ENCODE measurements at regions of chr5 and their contacts with region 1.

Region 1: DNA sequence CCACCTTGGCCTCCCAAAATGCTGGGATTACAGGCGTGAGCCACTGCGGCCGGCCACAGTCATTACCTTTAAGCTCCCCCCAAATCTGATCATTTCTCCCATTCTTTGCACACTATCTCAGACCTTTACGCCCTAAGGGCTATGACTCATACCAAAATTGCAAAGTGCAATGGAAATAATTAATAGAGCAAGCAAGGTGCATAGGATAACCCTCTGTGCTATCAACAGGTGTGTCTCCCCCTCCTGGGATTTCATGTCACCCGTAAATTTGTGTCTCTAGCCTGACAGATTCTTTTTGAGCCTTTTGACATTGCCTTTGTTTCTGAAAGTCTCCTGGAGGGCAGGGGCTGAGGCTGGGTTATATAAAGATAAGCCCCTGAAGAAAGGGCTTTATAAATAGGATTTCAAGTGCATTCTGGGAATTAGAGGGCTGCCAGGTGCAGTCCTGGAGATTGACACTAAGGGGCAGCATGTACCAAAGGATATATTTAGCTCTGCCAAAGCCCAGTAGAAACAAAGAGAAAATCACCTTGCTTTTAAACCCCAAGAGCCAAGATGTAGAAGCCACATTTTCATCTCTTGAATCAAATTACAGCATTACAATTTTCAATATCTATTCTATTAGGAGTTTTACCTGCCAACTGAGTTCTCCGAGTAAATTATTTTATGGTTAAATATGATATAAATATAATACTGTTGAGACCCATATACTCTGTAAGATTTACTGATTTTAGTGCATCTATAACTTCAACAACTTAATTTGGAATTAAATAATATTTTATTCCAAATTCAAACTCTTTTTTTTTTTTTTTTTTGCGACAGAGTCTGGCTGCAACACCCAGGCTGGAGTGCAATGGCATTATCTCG is 18.2 kb downstream of the S100Z start:
- DNase-seq: peak; percentile 49
- H3K4me3 Mint-ChIP-seq: no peak overlapping the region
- H3K27ac Mint-ChIP-seq: no peak overlapping the region
- H3K4me1 Mint-ChIP-seq: no peaks in the 10 kb centered on the region
- H3K27me3 Mint-ChIP-seq: no peaks in the 10 kb centered on the region

Region 2: DNA sequence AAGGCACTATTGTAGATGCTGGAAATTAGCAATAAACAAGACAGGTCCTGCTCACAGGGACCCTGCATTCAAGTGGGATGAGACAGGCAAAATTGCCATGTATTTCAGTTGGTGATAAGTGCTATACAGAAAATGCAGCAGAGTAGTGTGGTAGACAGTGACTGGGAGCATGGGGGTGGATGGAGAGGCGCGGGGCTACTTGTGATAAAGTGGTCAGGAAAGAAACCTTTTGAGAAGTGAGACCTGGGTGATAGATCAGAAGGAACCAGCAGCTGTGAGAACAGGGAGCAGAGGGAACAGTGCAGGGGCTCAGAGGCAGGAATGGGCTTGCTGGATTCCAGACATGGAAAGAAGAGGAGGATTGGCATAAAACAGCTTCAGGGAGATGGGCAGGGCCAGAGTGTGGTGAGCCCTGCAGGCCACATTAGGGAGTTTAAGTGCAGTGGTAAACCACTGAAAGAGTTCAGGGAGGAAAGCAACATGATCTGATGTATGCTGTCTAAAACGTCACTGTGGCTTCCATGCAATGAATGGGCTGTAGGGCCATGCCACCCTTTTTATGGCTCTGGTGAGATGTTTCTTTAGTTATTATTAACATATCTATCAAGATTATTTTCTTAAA is 92.1 kb after region 1 on chr5:
- intact Hi-C with region 1: no loop called
- DNase-seq: peak; percentile 18
- H3K4me3 Mint-ChIP-seq: no peak overlapping the region
- H3K27ac Mint-ChIP-seq: peak overlapping the region; percentile 0
- H3K4me1 Mint-ChIP-seq: peaks cover 18% of the 10 kb centered on the region
- H3K27me3 Mint-ChIP-seq: peaks cover 42% of the 10 kb centered on the region

Region 3: GRCh38 chr5:77015938-77016569 is 148.0 kb after region 1 on chr5:
- intact Hi-C with region 1: loop called (anchors 1 kb)
- DNase-seq: no peak
- H3K4me3 Mint-ChIP-seq: no peak overlapping the region
- H3K27ac Mint-ChIP-seq: no peak overlapping the region
- H3K4me1 Mint-ChIP-seq: peaks cover 12% of the 10 kb centered on the region
- H3K27me3 Mint-ChIP-seq: peaks cover 17% of the 10 kb centered on the region

Region 4: GRCh38 chr5:77030097-77031071 is 162.3 kb after region 1 on chr5 and contains the start of gene AGGF1:
- intact Hi-C with region 1: loop called (anchors 5 kb)
- DNase-seq: peak; percentile 90
- H3K4me3 Mint-ChIP-seq: peak within 1 kb of the TSS; percentile 98
- H3K27ac Mint-ChIP-seq: peak within 1 kb of the TSS; percentile 92
- H3K4me1 Mint-ChIP-seq: peaks cover 22% of the 10 kb centered on the region
- H3K27me3 Mint-ChIP-seq: peaks cover 7% of the 10 kb centered on the region
- total RNA-seq, gene AGGF1: 25.6 and 28.2 TPM in 2 replicates

Region 5: DNA sequence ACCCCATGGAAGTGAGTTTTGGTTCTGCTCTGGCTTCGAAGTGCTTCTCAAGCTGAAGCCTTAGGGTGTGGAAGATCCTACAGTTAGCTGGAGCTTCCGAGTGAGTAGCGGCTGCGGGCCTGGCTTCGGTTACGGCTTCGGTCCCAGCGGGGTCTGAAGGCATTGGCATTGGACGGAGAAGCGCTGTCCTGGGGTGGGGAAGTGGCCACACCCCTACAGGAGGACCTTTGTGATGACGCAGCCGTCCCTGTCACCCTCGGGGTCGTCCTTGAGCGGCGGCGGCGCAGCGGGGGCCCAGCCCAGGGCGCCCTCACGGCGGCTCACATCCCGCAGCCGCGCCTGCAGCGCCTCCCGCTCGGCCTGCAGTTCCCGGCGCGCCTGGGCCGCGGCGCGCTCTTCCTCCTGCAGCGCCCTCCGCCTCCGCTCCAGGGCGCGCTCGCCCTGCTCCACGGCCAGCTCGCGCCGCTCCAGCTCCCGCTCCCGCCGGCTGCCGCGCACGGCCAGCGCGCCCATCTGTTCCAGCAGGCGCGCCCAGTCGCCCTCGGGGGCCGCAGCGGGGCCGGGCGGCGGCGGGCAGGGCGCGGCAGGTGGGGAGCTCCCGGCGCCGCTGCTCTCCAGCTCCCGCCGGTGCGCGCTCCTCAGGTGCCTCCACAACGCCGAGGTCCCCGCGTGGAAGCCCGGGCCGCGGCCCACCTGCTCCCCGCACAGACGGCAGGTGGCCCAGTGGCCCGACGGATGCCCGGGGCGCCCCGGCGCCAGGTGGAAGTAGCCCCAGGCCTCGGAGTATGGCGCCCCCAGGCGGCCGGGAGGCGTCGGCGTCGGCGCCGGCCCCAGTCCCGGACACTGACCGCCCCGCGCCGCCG is 209.1 kb after region 1 on chr5:
- intact Hi-C with region 1: loop called (anchors 1 kb)
- DNase-seq: peak; percentile 47
- H3K4me3 Mint-ChIP-seq: peak overlapping the region; percentile 59
- H3K27ac Mint-ChIP-seq: no peak overlapping the region
- H3K4me1 Mint-ChIP-seq: peaks cover 5% of the 10 kb centered on the region
- H3K27me3 Mint-ChIP-seq: no peaks in the 10 kb centered on the region

Measured in activated T-helper 2 cell treated with anti-CD3 and anti-CD28 coated beads, Interferon-gamma antibody, Interleukin-2, Interleukin-4, amounts not matched to agents 10 μg/mL and 5 μg/mL and 100 μg/mL, durations not matched to agents 14 hours and 24 hours and 36 hours (primary cell).